Sigmoid colon (tissue), 7 donors: ENCODE measurements at regions of chr15 and their contacts with region 1.

Region 1: DNA sequence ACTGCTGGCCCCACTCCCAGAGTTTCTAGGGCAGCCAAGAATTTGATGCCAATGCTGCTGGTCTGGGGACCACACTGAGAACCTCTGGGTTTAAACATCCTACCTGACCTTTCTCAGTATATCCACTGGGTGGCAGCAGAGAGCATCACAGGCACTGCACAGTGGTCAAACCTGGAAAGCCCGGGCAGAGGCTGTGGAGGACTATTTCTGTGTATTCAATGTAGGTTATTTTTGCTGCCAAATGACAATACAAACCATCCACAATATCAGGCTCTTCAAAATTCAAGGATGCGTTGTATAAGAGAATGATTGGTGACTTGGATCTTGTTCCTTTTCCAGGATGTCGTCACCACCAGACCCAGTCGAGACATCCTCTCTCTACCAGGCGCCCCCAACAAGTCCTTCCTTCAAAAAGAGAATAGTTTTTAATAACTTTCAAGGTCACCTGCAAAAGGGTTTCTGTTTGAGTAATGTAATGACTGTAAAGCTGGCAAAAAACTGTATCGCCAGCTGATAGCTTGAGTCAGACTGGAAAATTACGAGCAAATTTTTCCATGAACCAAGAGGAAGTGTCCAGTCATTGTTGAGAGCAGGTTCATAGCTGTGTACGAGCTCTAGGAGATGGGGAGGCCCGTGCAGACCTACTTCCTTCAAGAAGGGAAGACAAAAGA is 30.5 kb upstream of the MYZAP start:
- DNase-seq: peak; percentile 86
- H3K4me3 ChIP-seq: no peak overlapping the region
- H3K27ac ChIP-seq: peak overlapping the region in 3 of 4 donors; percentile 15 to 33 (median 23)
- H3K4me1 ChIP-seq: peaks cover 0 to 14% (median 10%) of the 10 kb centered on the region in 4 donors
- H3K27me3 ChIP-seq: no peaks in the 10 kb centered on the region
- CTCF ChIP-seq: peak; percentile 60 to 94 (median 91)
- EP300 ChIP-seq: no peak
- POLR2A ChIP-seq: no peak

Region 2: DNA sequence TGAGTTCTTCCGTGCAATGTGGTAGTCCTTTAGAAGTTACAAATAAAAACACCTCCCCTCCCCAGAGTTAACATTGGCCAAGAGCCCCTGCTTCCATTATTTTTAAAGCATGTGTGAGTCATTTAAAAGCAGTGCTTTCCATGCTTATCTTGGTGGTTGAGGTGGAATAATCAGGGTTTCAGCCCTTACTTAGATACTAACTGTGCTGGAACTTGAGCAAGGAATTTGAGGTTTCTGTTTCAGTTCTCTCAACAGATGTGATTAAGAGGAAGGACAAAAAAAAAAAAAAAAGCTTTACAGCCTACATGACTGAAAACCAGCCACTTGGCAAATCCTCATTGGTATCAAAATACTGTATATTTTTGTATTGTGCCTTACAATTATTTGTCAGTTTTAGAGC is 120.4 kb before region 1 on chr15:
- intact Hi-C with region 1: no loop called
- DNase-seq: no peak
- H3K4me3 ChIP-seq: no peak overlapping the region
- H3K27ac ChIP-seq: no peak overlapping the region
- H3K4me1 ChIP-seq: no peaks in the 10 kb centered on the region
- H3K27me3 ChIP-seq: no peaks in the 10 kb centered on the region
- CTCF ChIP-seq: no peak
- EP300 ChIP-seq: no peak
- POLR2A ChIP-seq: no peak

Region 3: DNA sequence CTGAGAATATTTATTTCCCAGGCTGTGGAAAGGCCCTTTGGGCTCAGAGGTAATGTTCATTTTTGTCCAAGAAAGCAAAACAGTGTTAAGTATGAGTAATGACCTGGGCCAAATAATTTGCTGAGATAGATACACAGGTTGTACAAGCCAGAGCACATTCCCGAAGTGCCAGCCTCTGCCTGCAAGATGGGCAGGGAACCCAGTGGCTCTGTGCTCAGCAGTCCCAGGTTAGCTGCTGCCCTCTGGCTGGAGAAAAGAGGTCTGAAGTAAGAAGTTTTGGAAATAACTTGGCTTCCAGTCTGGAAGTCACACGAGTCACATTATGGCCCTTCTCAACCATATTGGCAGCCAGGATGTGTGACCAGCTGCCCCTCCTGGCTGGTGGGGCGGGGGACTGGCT is 50.8 kb after region 1 on chr15:
- intact Hi-C with region 1: loop called (anchors 1 kb)
- DNase-seq: peak; percentile 77
- H3K4me3 ChIP-seq: no peak overlapping the region
- H3K27ac ChIP-seq: peak overlapping the region; percentile 42 to 84 (median 80)
- H3K4me1 ChIP-seq: peaks cover 0 to 47% (median 42%) of the 10 kb centered on the region in 4 donors
- H3K27me3 ChIP-seq: no peaks in the 10 kb centered on the region
- CTCF ChIP-seq: peak; percentile 51 to 61 (median 56)
- EP300 ChIP-seq: no peak
- POLR2A ChIP-seq: no peak

Region 4: GRCh38 chr15:57626713-57627440 is 65.7 kb after region 1 on chr15:
- intact Hi-C with region 1: no loop called
- DNase-seq: no peak
- H3K4me3 ChIP-seq: no peak overlapping the region
- H3K27ac ChIP-seq: no peak overlapping the region
- H3K4me1 ChIP-seq: peaks cover 0 to 19% (median 14%) of the 10 kb centered on the region in 4 donors
- H3K27me3 ChIP-seq: no peaks in the 10 kb centered on the region
- CTCF ChIP-seq: no peak
- EP300 ChIP-seq: no peak
- POLR2A ChIP-seq: no peak

Region 5: GRCh38 chr15:57706405-57707209 is 145.4 kb after region 1 on chr15 and contains the start of gene POLR2M:
- intact Hi-C with region 1: loop called (anchors 5 kb)
- DNase-seq: peak; percentile 99
- H3K4me3 ChIP-seq: peak within 1 kb of the TSS; percentile 82 to 96 (median 86)
- H3K27ac ChIP-seq: peak within 1 kb of the TSS; percentile 94 to 97 (median 96)
- H3K4me1 ChIP-seq: peaks cover 0 to 35% (median 28%) of the 10 kb centered on the region in 4 donors
- H3K27me3 ChIP-seq: no peaks in the 10 kb centered on the region
- CTCF ChIP-seq: no peak
- EP300 ChIP-seq: peak; percentile 61 to 92 (median 71)
- POLR2A ChIP-seq: peak; percentile 61 to 68
- total RNA-seq, gene POLR2M: 80.6 to 264 (median 194) TPM